ENCODE measurements at regions of chr2 and their contacts with region 1.

Region 1: DNA sequence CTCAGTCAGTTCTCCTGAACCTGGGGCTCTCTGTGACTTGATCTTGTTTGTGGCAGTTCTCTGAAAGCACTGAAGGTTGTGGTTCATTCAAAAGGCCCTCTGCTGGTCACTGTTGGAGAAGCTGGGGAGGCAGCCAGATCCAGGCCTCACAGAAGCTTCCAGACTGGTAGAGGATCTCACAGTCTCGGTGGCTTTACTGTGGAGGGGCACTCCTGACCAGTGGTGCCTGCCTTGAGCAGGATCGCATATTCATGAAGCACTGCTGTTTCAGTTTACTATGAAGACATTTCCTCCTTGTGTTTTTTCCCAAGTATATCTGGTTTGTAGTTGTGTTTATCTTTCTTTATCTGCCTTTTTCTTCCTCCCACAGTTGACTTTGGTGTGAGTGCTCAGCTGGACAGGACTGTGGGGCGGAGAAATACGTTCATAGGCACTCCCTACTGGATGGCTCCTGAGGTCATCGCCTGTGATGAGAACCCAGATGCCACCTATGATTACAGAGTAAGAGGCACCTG is 133.9 kb downstream of the MAP4K4 start:
- DNase-seq: peak in 1 of 2 donors; percentile 89
- H3K4me3 ChIP-seq: no peak overlapping the region
- H3K27ac ChIP-seq: peak overlapping the region; percentile 30 to 56
- H3K4me1 ChIP-seq: peaks cover 0 to 28% of the 10 kb centered on the region in 2 donors
- H3K27me3 ChIP-seq: no peaks in the 10 kb centered on the region
- CTCF ChIP-seq: peak; percentile 63 to 76 (median 72)

Region 2: DNA sequence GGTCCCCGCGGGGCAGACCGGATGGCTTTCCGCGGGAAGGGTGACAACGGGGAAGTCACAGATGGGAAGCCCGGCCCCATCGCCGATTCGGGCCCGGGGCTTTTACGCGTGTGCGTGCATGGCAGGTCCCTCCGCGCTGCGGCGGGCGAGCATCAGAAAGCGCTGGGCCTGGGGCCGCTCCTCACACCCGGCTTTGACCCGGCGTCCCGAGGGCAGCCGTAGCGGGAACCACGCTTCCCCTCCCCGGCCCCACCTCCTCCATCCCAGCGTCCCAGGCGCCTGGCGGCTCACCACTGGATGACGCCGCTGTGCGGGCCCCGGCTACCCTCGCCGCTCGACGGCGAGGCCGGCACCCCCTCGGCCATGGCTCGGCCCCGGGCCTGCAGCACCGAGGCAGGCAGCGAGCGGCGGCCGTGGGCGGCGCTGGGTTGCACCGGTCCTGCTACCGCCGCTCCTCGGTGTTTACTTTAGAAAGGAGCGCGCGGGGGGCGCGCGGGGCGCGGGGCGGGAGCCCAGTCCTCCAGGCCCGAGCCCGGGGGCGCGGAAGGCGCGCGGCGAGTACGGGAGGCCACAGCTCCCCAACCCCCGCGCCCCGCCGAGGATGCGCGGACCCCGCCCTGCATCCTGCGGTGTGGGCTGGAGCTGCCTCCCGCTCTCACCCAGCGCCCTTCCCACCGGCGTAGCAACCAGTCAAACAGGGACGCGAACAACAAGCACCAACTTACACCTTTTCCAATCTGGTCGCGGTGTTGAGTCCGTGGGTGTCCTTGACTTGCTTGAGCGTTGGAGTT is 357.3 kb before region 1 on chr2:
- intact Hi-C with region 1: loop called (anchors 5 kb)
- DNase-seq: peak in 1 of 2 donors; percentile 76
- H3K4me3 ChIP-seq: peak overlapping the region; percentile 66 to 87
- H3K27ac ChIP-seq: peak overlapping the region; percentile 60 to 75
- H3K4me1 ChIP-seq: peaks cover 0 to 8% of the 10 kb centered on the region in 2 donors
- H3K27me3 ChIP-seq: no peaks in the 10 kb centered on the region
- CTCF ChIP-seq: no peak

Region 3: GRCh38 chr2:101518578-101519492 is 312.6 kb before region 1 on chr2:
- intact Hi-C with region 1: loop called (anchors 2 kb)
- DNase-seq: no peak
- H3K4me3 ChIP-seq: no peak overlapping the region
- H3K27ac ChIP-seq: no peak overlapping the region
- H3K4me1 ChIP-seq: peaks cover 0 to 13% of the 10 kb centered on the region in 2 donors
- H3K27me3 ChIP-seq: no peaks in the 10 kb centered on the region
- CTCF ChIP-seq: peak in 1 of 3 experiments; percentile 56

Region 4: GRCh38 chr2:101710471-101711318 is 120.7 kb before region 1 on chr2:
- intact Hi-C with region 1: no loop called
- DNase-seq: no peak
- H3K4me3 ChIP-seq: no peak overlapping the region
- H3K27ac ChIP-seq: no peak overlapping the region
- H3K4me1 ChIP-seq: peaks cover 0 to 46% of the 10 kb centered on the region in 2 donors
- H3K27me3 ChIP-seq: no peaks in the 10 kb centered on the region
- CTCF ChIP-seq: no peak

Measured in ascending aorta (tissue), 2 donors.